ENCODE measurements at regions of chr15 and their contacts with region 1.

Region 1: GRCh38 chr15:100602064-100602822 is at the starts of genes ASB7 and LINS1:
- DNase-seq: peak; percentile 100
- H3K4me3 Mint-ChIP-seq: no peak within 1 kb of the TSS
- H3K27ac Mint-ChIP-seq: no peak within 1 kb of the TSS
- H3K4me1 Mint-ChIP-seq: peaks cover 63% of the 10 kb centered on the region
- H3K27me3 Mint-ChIP-seq: no peaks in the 10 kb centered on the region
- total RNA-seq, gene ASB7: 19.6 to 21.3 TPM
- total RNA-seq, gene LINS1: 31.6 to 37.0 TPM

Region 2: DNA sequence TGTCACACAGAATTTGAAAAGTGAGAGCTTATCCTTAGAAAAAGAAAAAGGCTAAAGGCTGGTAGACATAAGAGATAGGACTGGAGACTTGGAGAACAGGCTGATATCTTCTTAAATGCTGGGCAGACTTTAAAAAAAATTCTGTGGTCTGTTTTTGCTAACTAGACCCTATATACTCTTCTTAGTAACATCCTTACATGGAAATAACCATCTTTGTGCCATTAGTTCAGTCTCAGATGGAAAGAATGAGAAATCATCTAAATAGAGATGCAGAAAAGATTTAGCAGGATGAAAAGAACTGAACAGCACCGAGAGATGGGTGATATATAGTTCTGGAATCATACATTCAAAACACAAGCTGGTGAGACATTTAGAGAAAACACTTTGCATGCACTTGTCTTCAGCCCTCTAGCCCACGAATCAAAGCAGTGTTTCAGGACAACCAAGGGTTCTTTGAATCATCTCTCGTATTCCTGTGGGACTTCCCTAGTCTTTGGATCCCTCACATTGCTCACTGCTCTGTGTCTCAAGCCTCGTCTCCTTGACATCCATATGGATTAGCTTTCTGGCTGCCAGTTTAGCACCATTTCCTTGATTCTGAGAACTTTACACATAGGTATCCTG is 776.0 kb before region 1 on chr15:
- CTCF ChIA-PET with region 1: no interaction called
- POLR2A ChIA-PET with region 1: no interaction called
- intact Hi-C with region 1: loop called (anchors 10 kb)
- DNase-seq: peak; percentile 43
- H3K4me3 Mint-ChIP-seq: peak overlapping the region; percentile 41
- H3K27ac Mint-ChIP-seq: peak overlapping the region; percentile 95
- H3K4me1 Mint-ChIP-seq: peaks cover 52% of the 10 kb centered on the region
- H3K27me3 Mint-ChIP-seq: no peaks in the 10 kb centered on the region

Region 3: DNA sequence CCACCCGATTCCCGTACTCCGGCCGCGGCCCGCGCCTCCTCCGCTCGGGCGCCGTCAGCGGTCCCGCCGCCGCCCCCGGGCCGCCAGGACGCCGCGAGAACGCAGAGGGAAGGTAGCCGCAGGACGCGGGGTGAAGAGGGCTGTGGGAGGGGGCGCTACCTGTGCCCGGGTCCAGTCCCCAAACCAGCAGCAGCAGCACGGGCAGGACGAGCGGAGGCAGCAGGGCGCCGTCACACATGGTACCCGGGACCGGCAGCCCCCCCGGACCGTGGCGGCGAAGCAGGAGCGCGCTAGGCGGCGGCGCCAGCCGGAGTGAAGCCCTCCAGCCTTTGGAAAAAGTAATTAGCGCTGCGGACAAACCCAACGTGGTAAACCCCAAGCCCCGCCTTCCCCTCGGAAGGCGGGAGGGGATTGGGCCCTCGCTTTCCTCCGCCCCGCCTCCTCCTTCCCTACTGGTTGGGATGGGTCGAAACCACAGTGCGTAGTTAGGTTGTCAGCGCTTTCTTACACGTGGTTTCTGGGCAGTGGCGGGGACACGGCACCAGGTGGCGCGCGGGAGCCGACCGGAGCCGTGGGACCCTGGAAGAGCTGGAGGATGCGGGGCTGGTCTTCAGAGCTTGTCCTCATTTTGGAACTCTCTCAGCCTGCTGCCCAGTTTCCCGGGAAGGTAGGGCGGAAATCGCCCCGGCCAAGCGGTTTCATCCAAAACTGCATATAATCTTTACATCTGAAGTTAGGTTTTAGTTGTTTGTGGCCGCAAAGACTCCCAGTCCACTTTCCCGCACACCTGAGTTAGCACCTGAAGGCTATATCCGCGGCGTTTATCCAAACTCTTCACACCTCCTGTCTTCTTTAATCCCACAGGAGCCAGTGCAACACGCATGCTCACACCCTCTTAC is 260.3 kb before region 1 on chr15 and contains the start of gene ADAMTS17:
- CTCF ChIA-PET with region 1: interaction called, 7 read pairs
- POLR2A ChIA-PET with region 1: no interaction called
- intact Hi-C with region 1: loop called (anchors 2 kb)
- DNase-seq: peak; percentile 95
- H3K4me3 Mint-ChIP-seq: peak within 1 kb of the TSS; percentile 54
- H3K27ac Mint-ChIP-seq: no peak within 1 kb of the TSS
- H3K4me1 Mint-ChIP-seq: peaks cover 15% of the 10 kb centered on the region
- H3K27me3 Mint-ChIP-seq: no peaks in the 10 kb centered on the region
- total RNA-seq, gene ADAMTS17: 0.99 to 1.2 TPM

Region 4: DNA sequence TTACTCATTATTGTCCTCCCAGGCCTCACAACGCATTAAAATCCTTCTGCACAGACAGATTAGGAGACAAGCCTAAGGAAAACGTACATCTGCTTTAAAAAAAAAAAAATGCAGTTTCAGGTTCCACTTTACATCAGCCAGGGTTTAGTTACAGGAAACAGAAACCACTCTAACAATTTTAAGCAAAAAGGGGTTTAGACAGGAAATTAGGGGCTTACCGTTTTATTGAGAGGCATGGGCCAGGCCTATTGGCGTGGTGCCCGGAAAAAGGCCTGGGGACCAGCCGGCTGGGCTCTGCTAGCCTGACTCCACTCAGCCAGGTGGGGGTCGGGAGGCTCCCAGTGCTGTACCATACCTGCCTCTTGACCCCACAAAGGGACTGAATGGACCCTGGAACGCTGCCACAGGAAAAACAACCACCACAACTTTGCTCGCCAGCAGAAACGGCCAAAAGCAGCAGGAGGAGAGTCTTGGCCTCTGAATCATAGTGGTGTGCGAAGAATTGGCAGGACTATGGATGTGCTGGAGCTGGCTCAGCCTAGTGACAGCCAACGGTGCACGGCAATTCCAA is 525.3 kb after region 1 on chr15:
- CTCF ChIA-PET with region 1: no interaction called
- POLR2A ChIA-PET with region 1: no interaction called
- intact Hi-C with region 1: loop called (anchors 5 kb)
- DNase-seq: peak; percentile 67
- H3K4me3 Mint-ChIP-seq: peak overlapping the region; percentile 53
- H3K27ac Mint-ChIP-seq: peak overlapping the region; percentile 91
- H3K4me1 Mint-ChIP-seq: peaks cover 50% of the 10 kb centered on the region
- H3K27me3 Mint-ChIP-seq: peaks cover 4% of the 10 kb centered on the region

Region 5: DNA sequence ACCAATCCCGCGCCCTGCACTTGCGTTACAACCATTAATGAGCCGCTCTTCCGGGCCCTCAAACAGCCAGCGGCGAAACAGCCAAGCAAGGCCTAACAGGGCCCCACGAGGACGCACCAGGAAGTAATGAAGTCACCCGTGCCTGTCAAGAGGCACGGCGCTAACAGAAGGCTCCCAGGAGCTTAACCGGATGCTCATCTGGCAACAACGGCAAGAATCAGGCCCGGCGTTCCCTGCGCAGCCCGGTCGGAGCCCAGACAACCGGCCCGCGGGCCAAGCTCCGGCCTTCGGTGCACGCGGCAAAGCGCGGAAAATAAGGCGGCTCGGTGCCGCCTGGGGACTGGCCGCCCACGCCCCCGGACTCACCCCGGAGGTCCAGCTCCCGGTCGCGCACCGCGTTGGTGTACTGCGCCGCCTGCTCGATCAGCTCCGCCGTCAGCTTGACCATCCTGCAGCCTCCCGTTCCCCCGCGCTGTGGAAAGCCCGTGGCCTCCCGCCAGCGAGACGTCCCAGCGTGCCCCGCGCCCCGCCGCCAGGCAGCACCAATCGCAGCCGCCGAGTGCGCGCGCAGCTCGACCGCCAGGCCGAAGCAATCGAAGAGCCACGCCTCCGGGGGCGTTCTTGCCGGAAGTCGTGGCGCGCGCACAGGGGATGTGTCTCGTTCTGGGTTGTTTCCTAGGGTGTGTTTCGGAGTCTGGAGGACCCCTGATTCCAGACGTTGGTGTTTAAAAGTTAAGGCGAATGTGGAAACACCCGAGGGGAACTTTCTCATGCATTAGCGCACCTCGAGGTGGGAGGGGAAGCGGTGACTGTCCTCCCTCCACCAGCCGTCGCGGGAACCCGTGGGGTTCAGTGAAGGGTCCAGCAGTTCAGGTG is 692.7 kb after region 1 on chr15 and contains the start of gene SNRPA1:
- CTCF ChIA-PET with region 1: no interaction called
- POLR2A ChIA-PET with region 1: no interaction called
- intact Hi-C with region 1: loop called (anchors 1 kb)
- DNase-seq: peak; percentile 98
- H3K4me3 Mint-ChIP-seq: peak within 1 kb of the TSS; percentile 95
- H3K27ac Mint-ChIP-seq: peak within 1 kb of the TSS; percentile 98
- H3K4me1 Mint-ChIP-seq: peaks cover 38% of the 10 kb centered on the region
- H3K27me3 Mint-ChIP-seq: no peaks in the 10 kb centered on the region
- total RNA-seq, gene SNRPA1: 167 to 173 TPM

Measured in activated CD4-positive, alpha-beta memory T cell treated with anti-CD3 and anti-CD28 coated beads for 36 hours (primary cell).